B cell (primary cell): ENCODE measurements at regions of chr20 and their contacts with region 1.

Region 1: DNA sequence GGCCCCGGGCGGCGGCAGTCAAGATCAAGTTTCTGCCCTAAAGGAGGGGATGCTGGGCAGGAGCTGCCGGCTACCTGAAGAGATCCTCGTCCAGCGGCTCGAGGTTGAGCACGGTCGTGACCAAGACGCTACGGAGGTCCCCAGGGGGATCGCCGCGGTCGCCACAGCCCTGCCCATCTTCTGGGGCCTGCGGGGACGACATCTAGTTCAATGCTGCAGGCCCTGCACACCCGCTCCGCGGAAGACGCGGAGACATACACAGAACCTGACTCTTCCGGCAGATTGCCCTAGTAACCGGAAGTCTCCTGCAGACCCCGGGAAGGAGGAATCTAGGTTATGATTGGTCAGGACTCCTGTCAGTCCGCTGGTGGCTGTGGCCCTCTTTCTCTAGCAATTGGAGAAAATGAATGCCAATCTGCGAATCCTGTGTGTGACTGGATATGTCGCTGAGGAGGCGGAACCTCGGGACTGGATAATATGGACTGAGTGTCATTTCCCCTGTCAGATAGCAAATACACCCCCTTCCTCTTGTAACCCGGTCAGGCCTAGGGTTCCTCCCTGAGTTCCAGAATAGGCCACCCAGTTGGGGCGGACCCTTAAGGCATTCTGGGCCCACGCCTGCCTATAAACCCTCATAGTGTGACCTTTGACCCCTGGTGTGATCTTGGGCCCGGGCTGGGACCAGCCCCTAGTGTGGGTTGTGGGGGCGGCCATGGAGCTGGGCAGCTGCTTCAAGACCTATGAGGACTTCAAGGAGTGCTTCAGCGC is at the starts of genes ACOT8 and ZSWIM3:
- DNase-seq: peak; percentile 99
- ATAC-seq: peak; percentile 98
- H3K4me3 ChIP-seq: peak within 1 kb of the TSS; percentile 69 to 94 (median 81)
- H3K4me3 Mint-ChIP-seq: peak within 1 kb of the TSS; percentile 93
- H3K27ac ChIP-seq: peak within 1 kb of the TSS; percentile 88
- H3K27ac Mint-ChIP-seq: peak within 1 kb of the TSS; percentile 96
- H3K4me1 ChIP-seq: peaks cover 18 to 29% of the 10 kb centered on the region in 2 donors
- H3K4me1 Mint-ChIP-seq: peaks cover 38% of the 10 kb centered on the region
- H3K27me3 ChIP-seq: no peaks in the 10 kb centered on the region
- H3K27me3 Mint-ChIP-seq: no peaks in the 10 kb centered on the region
- CTCF ChIP-seq: no peak
- total RNA-seq, gene ACOT8: 27.1 and 32.4 TPM in 2 replicates
- total RNA-seq, gene ZSWIM3: 7.1 and 7.8 TPM in 2 replicates

Region 2: DNA sequence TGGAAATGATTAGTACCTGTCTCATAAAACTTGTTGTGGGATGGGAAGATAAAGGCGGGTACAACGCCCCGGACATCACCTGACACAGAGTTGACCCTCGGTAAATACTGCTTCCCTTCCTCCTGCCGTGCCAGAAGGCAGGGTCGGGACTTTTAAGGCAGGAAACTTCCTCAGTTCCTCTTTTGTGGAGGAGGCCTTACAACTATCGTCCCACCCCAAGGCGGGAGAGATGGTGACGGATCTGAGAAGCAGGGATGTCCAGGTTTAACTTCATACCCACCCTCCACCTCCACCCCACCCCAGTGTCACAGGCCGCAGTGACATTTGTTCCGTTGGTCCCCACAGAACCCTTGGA is 65.0 kb before region 1 on chr20:
- CTCF ChIA-PET with region 1: no interaction called
- POLR2A ChIA-PET with region 1: no interaction called
- intact Hi-C with region 1: loop called (anchors 1 kb)
- DNase-seq: peak; percentile 61
- ATAC-seq: peak; percentile 22
- H3K4me3 ChIP-seq: peak overlapping the region; percentile 72 to 95 (median 89)
- H3K4me3 Mint-ChIP-seq: peak overlapping the region; percentile 90
- H3K27ac ChIP-seq: peak overlapping the region; percentile 75 to 96
- H3K27ac Mint-ChIP-seq: peak overlapping the region; percentile 93
- H3K4me1 ChIP-seq: peaks cover 8 to 13% of the 10 kb centered on the region in 2 donors
- H3K4me1 Mint-ChIP-seq: peaks cover 19% of the 10 kb centered on the region
- H3K27me3 ChIP-seq: no peaks in the 10 kb centered on the region
- H3K27me3 Mint-ChIP-seq: no peaks in the 10 kb centered on the region
- CTCF ChIP-seq: no peak

Region 3: GRCh38 chr20:45812157-45813020 is 44.9 kb before region 1 on chr20 and contains the start of gene UBE2C:
- CTCF ChIA-PET with region 1: no interaction called
- POLR2A ChIA-PET with region 1: no interaction called
- intact Hi-C with region 1: loop called (anchors 1 kb)
- DNase-seq: peak; percentile 96
- ATAC-seq: peak; percentile 100
- H3K4me3 ChIP-seq: peak within 1 kb of the TSS in 4 of 5 experiments; percentile 52 to 85 (median 65)
- H3K4me3 Mint-ChIP-seq: peak within 1 kb of the TSS; percentile 88
- H3K27ac ChIP-seq: no peak within 1 kb of the TSS
- H3K27ac Mint-ChIP-seq: peak within 1 kb of the TSS; percentile 70
- H3K4me1 ChIP-seq: peaks cover 9 to 16% of the 10 kb centered on the region in 2 donors
- H3K4me1 Mint-ChIP-seq: peaks cover 16% of the 10 kb centered on the region
- H3K27me3 ChIP-seq: peaks cover 0 to 2% (median 0%) of the 10 kb centered on the region in 4 experiments
- H3K27me3 Mint-ChIP-seq: no peaks in the 10 kb centered on the region
- CTCF ChIP-seq: no peak
- total RNA-seq, gene UBE2C: 0.54 TPM in 1 of 2 replicates, not detected in the other

Region 4: DNA sequence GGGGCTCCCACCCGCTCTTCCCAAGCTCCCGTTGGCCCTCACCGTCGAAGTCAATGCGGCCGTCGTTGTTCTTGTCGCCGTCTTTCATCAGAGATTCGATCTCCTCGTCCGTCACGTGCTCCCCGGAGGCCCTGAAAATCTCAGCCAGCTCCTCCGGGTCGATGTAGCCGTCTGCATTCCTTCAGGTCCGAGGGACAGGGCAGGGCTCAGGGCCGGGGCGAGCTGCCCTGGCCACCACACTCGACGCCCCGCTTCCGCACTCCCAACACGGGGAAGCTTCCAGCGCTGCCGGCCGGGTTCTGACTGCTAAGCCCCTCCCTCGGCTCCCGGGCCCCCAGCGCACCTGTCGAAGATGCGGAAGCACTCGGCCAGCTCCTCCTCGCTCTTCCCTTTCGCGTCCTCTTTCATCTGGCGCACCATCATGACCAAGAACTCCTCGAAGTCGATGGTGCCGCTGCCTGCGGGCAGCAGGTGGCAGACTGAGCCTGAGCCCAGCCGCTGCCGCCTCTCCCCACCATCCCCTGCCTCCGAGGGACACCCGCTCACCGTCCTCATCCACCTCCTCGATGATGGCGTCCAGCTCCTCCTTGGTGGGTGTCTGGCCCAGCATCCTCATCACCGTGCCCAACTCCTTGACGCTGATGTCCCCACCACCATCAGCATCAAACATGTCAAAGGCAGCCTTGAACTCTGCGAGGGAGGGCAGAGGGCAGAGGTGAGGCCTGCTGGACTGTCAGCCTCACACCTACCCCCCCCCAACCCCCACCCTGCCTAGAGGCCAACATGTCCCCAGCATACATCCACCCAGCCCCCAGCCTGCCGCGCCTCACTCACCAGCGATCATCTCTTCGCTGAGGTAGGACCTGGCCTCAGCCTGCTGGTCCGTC is 33.1 kb before region 1 on chr20:
- CTCF ChIA-PET with region 1: no interaction called
- POLR2A ChIA-PET with region 1: no interaction called
- intact Hi-C with region 1: loop called (anchors 1 kb)
- DNase-seq: peak; percentile 77
- ATAC-seq: peak; percentile 83
- H3K4me3 ChIP-seq: peak overlapping the region in 4 of 5 experiments; percentile 2 to 51 (median 45)
- H3K4me3 Mint-ChIP-seq: peak overlapping the region; percentile 92
- H3K27ac ChIP-seq: no peak overlapping the region
- H3K27ac Mint-ChIP-seq: peak overlapping the region; percentile 86
- H3K4me1 ChIP-seq: peaks cover 17 to 23% of the 10 kb centered on the region in 2 donors
- H3K4me1 Mint-ChIP-seq: peaks cover 21% of the 10 kb centered on the region
- H3K27me3 ChIP-seq: peaks cover 0 to 21% (median 9%) of the 10 kb centered on the region in 4 experiments
- H3K27me3 Mint-ChIP-seq: peaks cover 23% of the 10 kb centered on the region
- CTCF ChIP-seq: no peak

Region 5: DNA sequence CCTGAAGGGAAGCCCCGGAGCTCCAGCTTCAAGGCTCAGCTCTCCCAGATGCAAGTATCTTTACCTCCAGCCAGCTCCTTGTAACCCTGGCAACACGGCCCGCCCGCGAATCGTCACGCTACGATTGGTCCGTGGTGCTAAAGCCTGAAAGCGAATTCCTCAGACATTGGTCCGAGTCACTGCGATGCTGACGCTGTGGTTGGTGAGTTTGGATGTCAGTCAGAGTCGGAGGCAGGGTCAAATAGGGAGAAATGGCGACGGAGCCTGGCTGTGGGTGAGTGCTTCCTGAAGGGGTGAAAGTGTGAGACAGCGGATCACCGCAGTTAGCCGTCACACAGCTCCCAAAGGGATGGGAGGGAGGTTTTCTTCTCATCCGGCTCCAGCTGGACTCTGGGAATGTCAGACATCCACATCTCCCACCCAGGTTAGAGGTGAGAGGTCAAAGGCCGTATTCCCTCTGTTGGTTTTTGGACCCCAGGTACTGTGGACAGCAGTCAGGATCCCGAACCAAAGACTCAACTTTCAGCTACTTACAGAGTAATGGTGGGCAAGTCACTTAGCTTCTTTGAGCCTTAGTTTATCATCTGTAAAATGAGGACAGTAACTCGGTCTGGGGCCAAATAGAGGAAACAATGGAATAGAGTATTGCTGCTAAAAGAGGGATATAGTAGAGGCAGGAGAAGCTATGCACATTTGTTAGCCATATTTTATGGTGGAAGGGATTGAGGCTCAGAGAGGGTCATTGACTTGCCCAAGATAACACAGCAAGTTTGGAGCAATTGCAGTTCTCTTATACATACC is 23.9 kb after region 1 on chr20 and contains the start of gene ZSWIM1:
- CTCF ChIA-PET with region 1: interaction called, 4 read pairs
- POLR2A ChIA-PET with region 1: no interaction called
- intact Hi-C with region 1: loop called (anchors 1 kb)
- DNase-seq: peak; percentile 99
- ATAC-seq: peak; percentile 99
- H3K4me3 ChIP-seq: peak within 1 kb of the TSS; percentile 76 to 96 (median 86)
- H3K4me3 Mint-ChIP-seq: peak within 1 kb of the TSS; percentile 91
- H3K27ac ChIP-seq: peak within 1 kb of the TSS; percentile 82 to 89
- H3K27ac Mint-ChIP-seq: peak within 1 kb of the TSS; percentile 90
- H3K4me1 ChIP-seq: peaks cover 3 to 19% of the 10 kb centered on the region in 2 donors
- H3K4me1 Mint-ChIP-seq: peaks cover 33% of the 10 kb centered on the region
- H3K27me3 ChIP-seq: no peaks in the 10 kb centered on the region
- H3K27me3 Mint-ChIP-seq: no peaks in the 10 kb centered on the region
- CTCF ChIP-seq: no peak
- total RNA-seq, gene ZSWIM1: 15.7 and 18.5 TPM in 2 replicates

Region 6: GRCh38 chr20:45910670-45911485 is 53.6 kb after region 1 on chr20:
- CTCF ChIA-PET with region 1: no interaction called
- POLR2A ChIA-PET with region 1: interaction called, 3 read pairs
- intact Hi-C with region 1: loop called (anchors 1 kb)
- DNase-seq: peak; percentile 95
- ATAC-seq: peak; percentile 93
- H3K4me3 ChIP-seq: peak overlapping the region in 4 of 5 experiments; percentile 37 to 65 (median 60)
- H3K4me3 Mint-ChIP-seq: peak overlapping the region; percentile 94
- H3K27ac ChIP-seq: no peak overlapping the region
- H3K27ac Mint-ChIP-seq: peak overlapping the region; percentile 28
- H3K4me1 ChIP-seq: peaks cover 14 to 22% of the 10 kb centered on the region in 2 donors
- H3K4me1 Mint-ChIP-seq: peaks cover 20% of the 10 kb centered on the region
- H3K27me3 ChIP-seq: peaks cover 0 to 19% (median 9%) of the 10 kb centered on the region in 4 experiments
- H3K27me3 Mint-ChIP-seq: peaks cover 7% of the 10 kb centered on the region
- CTCF ChIP-seq: no peak